ENCODE measurements at regions of chr11 and their contacts with region 1.

Region 1: GRCh38 chr11:67630228-67630942 is 648 bp upstream of the NUDT8 start:
- DNase-seq: peak in 8 of 9 donors; percentile 40 to 97 (median 86)
- ATAC-seq: peak; percentile 87
- H3K4me3 ChIP-seq: peak overlapping the region; percentile 84
- H3K4me3 Mint-ChIP-seq: peak overlapping the region; percentile 84 to 94 (median 89)
- H3K27ac ChIP-seq: peak overlapping the region; percentile 85
- H3K27ac Mint-ChIP-seq: peak overlapping the region; percentile 74 to 96 (median 89)
- H3K4me1 ChIP-seq: peaks cover 8 to 9% of the 10 kb centered on the region in 2 donors
- H3K4me1 Mint-ChIP-seq: peaks cover 5 to 15% (median 7%) of the 10 kb centered on the region in 7 donors
- H3K27me3 ChIP-seq: no peaks in the 10 kb centered on the region
- H3K27me3 Mint-ChIP-seq: no peaks in the 10 kb centered on the region

Region 2: DNA sequence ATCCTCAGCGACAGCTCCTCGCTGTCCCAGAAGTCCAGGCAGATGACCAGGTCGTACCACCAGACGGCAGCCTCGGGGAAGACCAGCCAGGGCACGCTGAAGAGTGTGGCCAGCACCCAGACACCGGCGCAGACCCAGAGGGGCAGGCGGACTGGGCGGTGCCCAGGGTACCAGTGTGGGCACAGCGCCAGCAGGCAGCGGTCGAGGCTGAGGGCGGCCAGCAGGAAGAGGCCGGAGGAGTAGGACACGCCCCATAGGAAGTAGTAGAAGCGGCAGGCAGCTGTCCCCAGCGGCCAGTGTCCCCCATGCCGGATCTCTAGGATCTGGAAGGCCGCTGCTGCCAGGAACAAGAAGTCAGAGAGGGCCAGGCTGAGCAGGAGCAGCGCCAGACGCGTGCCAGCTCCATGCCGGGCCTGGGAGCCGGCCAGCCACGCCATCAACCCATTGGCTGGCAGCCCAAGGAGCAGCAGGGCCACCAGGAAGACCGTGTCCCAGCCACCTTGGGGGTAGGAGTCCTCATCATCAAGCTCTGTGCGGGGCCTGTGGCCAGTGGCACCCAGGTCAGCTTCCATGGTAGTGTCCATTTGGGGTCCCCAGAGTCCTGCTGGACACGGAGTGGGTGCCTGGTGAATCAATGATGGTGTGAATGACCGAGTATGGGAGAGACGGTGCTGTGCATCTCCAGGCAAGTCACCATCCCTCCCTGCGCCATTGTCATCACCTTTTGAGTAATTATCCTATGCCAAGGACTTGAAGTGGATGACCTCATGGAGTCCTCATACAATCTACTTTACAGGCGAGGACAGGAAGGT is 178.0 kb before region 1 on chr11 and contains the start of gene GPR152:
- CTCF ChIA-PET with region 1: no interaction called
- POLR2A ChIA-PET with region 1: no interaction called
- intact Hi-C with region 1: no loop called
- DNase-seq: no peak
- ATAC-seq: no peak
- H3K4me3 ChIP-seq: no peak within 1 kb of the TSS
- H3K4me3 Mint-ChIP-seq: peak within 1 kb of the TSS in 2 of 10 donors; percentile 27 to 31
- H3K27ac ChIP-seq: no peak within 1 kb of the TSS
- H3K27ac Mint-ChIP-seq: peak within 1 kb of the TSS in 4 of 9 donors; percentile 17 to 68 (median 40)
- H3K4me1 ChIP-seq: peaks cover 9 to 24% of the 10 kb centered on the region in 2 donors
- H3K4me1 Mint-ChIP-seq: peaks cover 15 to 42% (median 23%) of the 10 kb centered on the region in 7 donors
- H3K27me3 ChIP-seq: no peaks in the 10 kb centered on the region
- H3K27me3 Mint-ChIP-seq: no peaks in the 10 kb centered on the region
- total RNA-seq, gene GPR152: not detected

Region 3: GRCh38 chr11:67464411-67465183 is 165.8 kb before region 1 on chr11:
- CTCF ChIA-PET with region 1: no interaction called
- POLR2A ChIA-PET with region 1: no interaction called
- intact Hi-C with region 1: no loop called
- DNase-seq: peak; percentile 78 to 92 (median 91)
- ATAC-seq: peak; percentile 86
- H3K4me3 ChIP-seq: peak overlapping the region; percentile 66
- H3K4me3 Mint-ChIP-seq: peak overlapping the region; percentile 75 to 94 (median 87)
- H3K27ac ChIP-seq: peak overlapping the region; percentile 96
- H3K27ac Mint-ChIP-seq: peak overlapping the region; percentile 82 to 97 (median 93)
- H3K4me1 ChIP-seq: peaks cover 20 to 40% of the 10 kb centered on the region in 2 donors
- H3K4me1 Mint-ChIP-seq: peaks cover 23 to 48% (median 34%) of the 10 kb centered on the region in 7 donors
- H3K27me3 ChIP-seq: no peaks in the 10 kb centered on the region
- H3K27me3 Mint-ChIP-seq: peaks cover 0 to 2% (median 0%) of the 10 kb centered on the region in 5 donors

Region 4: GRCh38 chr11:67583247-67584204 is 46.9 kb before region 1 on chr11 and contains the start of gene GSTP1:
- CTCF ChIA-PET with region 1: no interaction called
- POLR2A ChIA-PET with region 1: interaction called, 7 read pairs
- intact Hi-C with region 1: loop called in 1 of 2 experiments (anchors 1 kb)
- DNase-seq: peak; percentile 51 to 86 (median 62)
- ATAC-seq: peak; percentile 86
- H3K4me3 ChIP-seq: peak within 1 kb of the TSS; percentile 69
- H3K4me3 Mint-ChIP-seq: peak within 1 kb of the TSS; percentile 79 to 98 (median 92)
- H3K27ac ChIP-seq: peak within 1 kb of the TSS; percentile 77
- H3K27ac Mint-ChIP-seq: peak within 1 kb of the TSS; percentile 78 to 93 (median 90)
- H3K4me1 ChIP-seq: peaks cover 9 to 18% of the 10 kb centered on the region in 2 donors
- H3K4me1 Mint-ChIP-seq: peaks cover 37 to 55% (median 44%) of the 10 kb centered on the region in 7 donors
- H3K27me3 ChIP-seq: no peaks in the 10 kb centered on the region
- H3K27me3 Mint-ChIP-seq: peaks cover 0 to 27% (median 0%) of the 10 kb centered on the region in 5 donors
- total RNA-seq, gene GSTP1: 77.2 to 265 (median 139) TPM

Region 5: GRCh38 chr11:67613960-67614715 is 16.2 kb before region 1 on chr11:
- CTCF ChIA-PET with region 1: interaction called, 8 read pairs
- POLR2A ChIA-PET with region 1: interaction called, 27 read pairs
- intact Hi-C with region 1: loop called (anchors 1 kb)
- DNase-seq: peak; percentile 65 to 89 (median 85)
- ATAC-seq: peak; percentile 95
- H3K4me3 ChIP-seq: peak overlapping the region; percentile 60
- H3K4me3 Mint-ChIP-seq: peak overlapping the region; percentile 59 to 87 (median 82)
- H3K27ac ChIP-seq: peak overlapping the region; percentile 96
- H3K27ac Mint-ChIP-seq: peak overlapping the region; percentile 92 to 99 (median 98)
- H3K4me1 ChIP-seq: peaks cover 25 to 26% of the 10 kb centered on the region in 2 donors
- H3K4me1 Mint-ChIP-seq: peaks cover 21 to 50% (median 37%) of the 10 kb centered on the region in 7 donors
- H3K27me3 ChIP-seq: no peaks in the 10 kb centered on the region
- H3K27me3 Mint-ChIP-seq: peaks cover 0 to 9% (median 0%) of the 10 kb centered on the region in 5 donors

Region 6: DNA sequence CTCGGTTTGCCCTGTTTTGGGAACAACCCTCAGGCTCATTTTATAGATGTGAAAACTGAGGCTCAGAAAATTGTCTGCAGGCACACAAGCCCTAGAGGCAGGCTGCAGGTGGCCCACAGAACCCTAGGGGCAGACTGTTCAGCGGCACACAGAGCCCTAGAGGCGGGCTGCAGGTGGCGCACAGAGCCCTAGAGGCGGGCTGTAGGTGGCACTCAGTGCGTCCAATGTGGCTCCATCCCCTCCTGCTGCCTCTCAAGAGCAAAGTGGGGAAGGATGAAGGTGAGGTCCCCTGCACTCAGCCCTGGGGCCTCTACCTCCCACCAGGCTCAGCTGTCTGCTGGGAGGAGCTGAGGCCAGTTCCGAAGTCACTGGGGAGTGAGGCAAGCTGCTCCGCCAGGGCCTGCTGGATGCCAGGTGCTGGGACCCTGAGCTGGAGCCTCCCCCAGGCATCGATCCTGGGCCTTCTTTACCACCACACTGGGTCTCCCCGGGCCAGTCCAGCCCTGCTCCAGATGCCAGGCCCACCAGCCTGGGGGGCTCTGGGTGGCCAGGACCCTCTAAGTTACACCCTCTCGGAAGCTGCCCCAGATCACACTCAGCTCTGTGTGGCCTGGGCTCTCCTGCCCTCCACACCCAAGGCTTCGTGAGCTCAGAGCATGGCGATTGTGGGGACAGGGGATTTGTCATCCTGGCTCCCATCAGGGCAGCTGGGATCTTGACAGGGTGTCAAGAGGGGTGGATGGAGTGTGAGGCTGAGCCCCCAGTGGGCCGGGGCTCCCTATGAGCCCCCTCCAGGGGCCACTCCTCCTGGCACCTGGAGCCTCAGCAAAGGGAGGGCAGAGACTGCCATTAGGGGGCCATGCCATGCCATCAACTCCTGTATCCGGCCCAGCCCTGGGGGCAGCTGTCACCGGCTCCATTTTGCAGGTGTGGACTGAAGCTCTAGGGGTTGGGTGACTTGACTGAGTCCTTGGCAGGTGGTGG is 18.0 kb after region 1 on chr11:
- CTCF ChIA-PET with region 1: interaction called, 9 read pairs
- POLR2A ChIA-PET with region 1: interaction called, 13 read pairs
- intact Hi-C with region 1: loop called in 1 of 2 experiments (anchors 1 kb)
- DNase-seq: peak in 7 of 9 donors; percentile 48 to 69 (median 58)
- ATAC-seq: peak; percentile 89
- H3K4me3 ChIP-seq: no peak overlapping the region
- H3K4me3 Mint-ChIP-seq: peak overlapping the region in 6 of 10 donors; percentile 12 to 71 (median 40)
- H3K27ac ChIP-seq: no peak overlapping the region
- H3K27ac Mint-ChIP-seq: peak overlapping the region in 4 of 9 donors; percentile 21 to 56 (median 53)
- H3K4me1 ChIP-seq: peaks cover 23 to 38% of the 10 kb centered on the region in 2 donors
- H3K4me1 Mint-ChIP-seq: peaks cover 11 to 41% (median 35%) of the 10 kb centered on the region in 7 donors
- H3K27me3 ChIP-seq: no peaks in the 10 kb centered on the region
- H3K27me3 Mint-ChIP-seq: peaks cover 0 to 15% (median 5%) of the 10 kb centered on the region in 5 donors

Region 7: DNA sequence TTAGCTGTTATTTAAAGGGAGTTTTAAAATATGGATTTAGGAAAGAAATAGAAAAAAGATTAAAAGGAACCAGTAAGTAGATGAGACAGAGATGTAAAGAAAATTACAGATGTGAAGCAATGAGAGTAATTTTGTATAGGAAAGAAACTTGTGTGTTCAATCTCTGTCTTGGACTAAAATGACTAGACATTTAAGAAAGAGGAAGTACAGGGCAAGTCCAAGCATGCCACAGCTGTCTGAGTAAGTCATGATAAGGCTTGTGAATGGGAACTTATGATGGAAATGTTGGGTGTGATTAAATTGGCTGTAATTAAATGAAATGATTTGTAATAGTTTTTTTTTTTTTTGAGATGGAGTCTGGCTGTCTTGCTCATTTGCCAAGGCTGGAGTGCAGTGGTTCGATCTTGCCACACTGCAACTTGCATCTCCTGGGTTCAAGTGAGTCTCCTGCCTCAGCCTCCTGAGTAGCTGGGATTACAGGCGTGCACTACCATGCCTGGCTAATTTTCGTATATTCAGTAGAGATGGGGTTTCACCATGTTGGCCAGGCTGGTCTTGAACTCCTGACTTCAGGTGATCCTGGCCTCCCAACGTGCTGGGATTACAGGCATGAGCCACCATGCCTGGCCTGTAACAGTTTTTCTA is 26.0 kb after region 1 on chr11:
- CTCF ChIA-PET with region 1: interaction called, 13 read pairs
- POLR2A ChIA-PET with region 1: interaction called, 7 read pairs
- intact Hi-C with region 1: loop called (anchors 1 kb)
- DNase-seq: no peak
- ATAC-seq: no peak
- H3K4me3 ChIP-seq: no peak overlapping the region
- H3K4me3 Mint-ChIP-seq: no peak overlapping the region
- H3K27ac ChIP-seq: no peak overlapping the region
- H3K27ac Mint-ChIP-seq: peak overlapping the region in 1 of 9 donors; percentile 49
- H3K4me1 ChIP-seq: no peaks in the 10 kb centered on the region
- H3K4me1 Mint-ChIP-seq: peaks cover 0 to 5% (median 0%) of the 10 kb centered on the region in 7 donors
- H3K27me3 ChIP-seq: no peaks in the 10 kb centered on the region
- H3K27me3 Mint-ChIP-seq: peaks cover 0 to 17% (median 0%) of the 10 kb centered on the region in 5 donors

Region 8: DNA sequence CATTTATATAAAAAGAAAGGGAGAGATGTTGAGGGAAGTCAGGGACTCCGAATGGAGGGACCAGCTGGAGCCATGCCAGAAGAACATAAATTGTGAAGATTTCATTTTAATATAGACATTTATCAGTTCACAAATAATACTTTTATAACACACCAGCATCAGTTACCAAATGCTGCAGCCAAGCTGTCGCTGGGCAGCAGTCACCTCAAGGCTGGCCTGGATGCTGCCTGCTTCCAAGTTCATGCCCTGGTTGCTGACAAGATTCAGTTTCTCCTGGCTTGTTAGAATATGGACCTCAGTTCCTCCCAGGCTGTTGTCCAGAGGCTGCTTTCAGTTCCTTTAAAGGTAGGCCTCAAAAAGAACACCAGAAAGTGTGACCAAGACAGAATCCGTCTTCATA is 74.9 kb after region 1 on chr11:
- CTCF ChIA-PET with region 1: no interaction called
- POLR2A ChIA-PET with region 1: no interaction called
- intact Hi-C with region 1: loop called in 1 of 2 experiments (anchors 5 kb)
- DNase-seq: no peak
- ATAC-seq: no peak
- H3K4me3 ChIP-seq: no peak overlapping the region
- H3K4me3 Mint-ChIP-seq: no peak overlapping the region
- H3K27ac ChIP-seq: no peak overlapping the region
- H3K27ac Mint-ChIP-seq: no peak overlapping the region
- H3K4me1 ChIP-seq: no peaks in the 10 kb centered on the region
- H3K4me1 Mint-ChIP-seq: no peaks in the 10 kb centered on the region
- H3K27me3 ChIP-seq: no peaks in the 10 kb centered on the region
- H3K27me3 Mint-ChIP-seq: peaks cover 6 to 13% (median 9%) of the 10 kb centered on the region in 5 donors